CD8-positive, alpha-beta T cell (primary cell): ENCODE measurements at regions of chr19 and their contacts with region 1.

Region 1: DNA sequence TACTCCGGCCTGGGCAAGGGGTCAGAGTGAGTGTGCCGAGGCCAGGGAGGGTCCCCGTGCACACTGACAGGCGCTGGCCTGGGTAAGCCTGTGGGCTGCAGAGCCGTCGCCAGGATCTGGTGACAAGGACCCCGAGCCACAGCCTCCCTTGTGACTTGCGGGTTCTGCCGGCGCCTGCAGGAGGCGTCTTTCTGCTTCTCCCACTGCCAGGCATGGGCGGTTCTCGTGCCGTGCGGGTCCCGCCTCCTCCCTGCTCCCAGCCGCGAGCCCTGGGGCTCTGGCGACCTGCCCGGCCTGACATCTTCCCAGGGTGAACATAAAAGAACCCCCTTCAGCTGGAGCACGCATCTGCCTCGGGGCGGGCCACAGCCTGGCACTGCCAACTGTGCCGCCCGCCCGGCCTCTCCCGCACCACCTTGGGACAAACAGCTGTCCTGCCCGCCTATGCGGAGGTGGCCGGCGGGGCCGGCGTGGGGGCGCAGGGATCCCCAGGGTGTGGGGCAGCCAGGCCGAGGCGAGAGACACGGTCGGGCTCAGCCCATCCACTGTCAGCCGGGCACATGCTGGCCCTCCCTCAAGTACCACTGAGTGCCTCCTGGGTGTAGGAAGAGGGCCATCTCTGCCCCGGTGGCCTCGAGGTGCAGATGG is 1.5 kb upstream of the HCN2 start:
- DNase-seq: peak in 8 of 9 experiments; percentile 36 to 81 (median 68)
- ATAC-seq: peak; percentile 65
- H3K4me3 ChIP-seq: no peak overlapping the region
- H3K4me3 Mint-ChIP-seq: peak overlapping the region; percentile 37
- H3K27ac ChIP-seq: no peak overlapping the region
- H3K27ac Mint-ChIP-seq: no peak overlapping the region
- H3K4me1 ChIP-seq: peaks cover 26% of the 10 kb centered on the region
- H3K4me1 Mint-ChIP-seq: peaks cover 16% of the 10 kb centered on the region
- H3K27me3 ChIP-seq: peaks cover 11 to 38% of the 10 kb centered on the region in 2 experiments
- H3K27me3 Mint-ChIP-seq: peaks cover 15% of the 10 kb centered on the region
- CTCF ChIP-seq: peak; percentile 61

Region 2: GRCh38 chr19:535017-535835 is 53.0 kb before region 1 on chr19:
- CTCF ChIA-PET with region 1: no interaction called
- POLR2A ChIA-PET with region 1: no interaction called
- intact Hi-C with region 1: no loop called
- DNase-seq: no peak
- ATAC-seq: no peak
- H3K4me3 ChIP-seq: no peak overlapping the region
- H3K4me3 Mint-ChIP-seq: no peak overlapping the region
- H3K27ac ChIP-seq: no peak overlapping the region
- H3K27ac Mint-ChIP-seq: no peak overlapping the region
- H3K4me1 ChIP-seq: peaks cover 20% of the 10 kb centered on the region
- H3K4me1 Mint-ChIP-seq: peaks cover 12% of the 10 kb centered on the region
- H3K27me3 ChIP-seq: no peaks in the 10 kb centered on the region
- H3K27me3 Mint-ChIP-seq: no peaks in the 10 kb centered on the region
- CTCF ChIP-seq: no peak

Region 3: DNA sequence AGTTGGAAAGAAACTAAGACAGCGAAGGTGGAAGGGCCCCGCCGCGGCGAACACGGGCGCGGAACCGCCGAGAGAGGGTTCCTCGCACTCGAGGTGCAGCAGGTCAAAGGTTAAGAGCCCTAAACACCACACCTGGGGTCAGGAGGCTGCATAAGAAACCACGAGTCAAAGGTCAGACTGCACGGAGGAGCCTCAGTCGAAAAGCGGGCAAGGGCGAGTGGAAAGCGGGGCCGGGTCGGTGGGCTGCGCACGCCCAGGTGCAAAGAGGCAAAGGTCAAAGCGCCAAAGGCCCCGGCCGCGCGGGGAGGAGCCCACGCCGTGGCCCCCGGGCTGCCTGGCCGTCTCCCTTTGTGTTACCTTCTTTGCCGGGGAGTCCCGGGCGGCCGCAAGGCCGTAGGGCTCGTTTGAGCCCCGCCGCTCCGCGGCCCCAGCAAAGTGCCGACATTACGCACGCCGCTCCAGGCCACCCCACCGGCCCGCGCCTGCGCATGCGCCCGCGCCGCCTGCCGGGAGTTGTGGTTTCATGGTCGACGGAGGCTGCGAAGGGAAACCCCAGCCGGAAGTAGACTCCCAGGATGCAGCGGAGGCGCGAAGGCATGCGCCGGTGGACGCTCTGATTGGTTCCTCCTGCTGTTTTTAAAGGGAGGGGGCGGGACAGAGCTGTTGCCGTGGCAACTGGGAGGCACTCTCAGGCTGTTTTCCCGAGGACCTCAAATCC is 45.0 kb after region 1 on chr19 and contains the start of gene POLRMT:
- CTCF ChIA-PET with region 1: interaction called, 8 read pairs
- POLR2A ChIA-PET with region 1: no interaction called
- intact Hi-C with region 1: loop called in 1 of 2 experiments (anchors 5 kb)
- DNase-seq: peak; percentile 88 to 99 (median 95)
- ATAC-seq: peak; percentile 95
- H3K4me3 ChIP-seq: peak within 1 kb of the TSS; percentile 89 to 93
- H3K4me3 Mint-ChIP-seq: peak within 1 kb of the TSS; percentile 95
- H3K27ac ChIP-seq: peak within 1 kb of the TSS; percentile 61 to 72
- H3K27ac Mint-ChIP-seq: peak within 1 kb of the TSS; percentile 94
- H3K4me1 ChIP-seq: peaks cover 22% of the 10 kb centered on the region
- H3K4me1 Mint-ChIP-seq: peaks cover 30% of the 10 kb centered on the region
- H3K27me3 ChIP-seq: no peaks in the 10 kb centered on the region
- H3K27me3 Mint-ChIP-seq: no peaks in the 10 kb centered on the region
- CTCF ChIP-seq: no peak
- total RNA-seq, gene POLRMT: 48.6 to 53.7 TPM

Region 4: GRCh38 chr19:734716-735115 is 146.5 kb after region 1 on chr19:
- CTCF ChIA-PET with region 1: interaction called, 12 read pairs
- POLR2A ChIA-PET with region 1: no interaction called
- intact Hi-C with region 1: loop called in 1 of 2 experiments (anchors 1 kb)
- DNase-seq: peak in 1 of 9 experiments; percentile 9
- ATAC-seq: no peak
- H3K4me3 ChIP-seq: no peak overlapping the region
- H3K4me3 Mint-ChIP-seq: no peak overlapping the region
- H3K27ac ChIP-seq: no peak overlapping the region
- H3K27ac Mint-ChIP-seq: no peak overlapping the region
- H3K4me1 ChIP-seq: no peaks in the 10 kb centered on the region
- H3K4me1 Mint-ChIP-seq: peaks cover 3% of the 10 kb centered on the region
- H3K27me3 ChIP-seq: no peaks in the 10 kb centered on the region
- H3K27me3 Mint-ChIP-seq: peaks cover 3% of the 10 kb centered on the region
- CTCF ChIP-seq: no peak